Naive thymus-derived CD8-positive, alpha-beta T cell (primary cell): ENCODE measurements at regions of chr6 and their contacts with region 1.

Region 1: GRCh38 chr6:170554013-170554795 is at the start of gene TBP:
- DNase-seq: peak; percentile 87 to 99 (median 97)
- ATAC-seq: peak; percentile 88 to 90
- H3K4me3 Mint-ChIP-seq: no peak within 1 kb of the TSS
- H3K27ac Mint-ChIP-seq: no peak within 1 kb of the TSS
- H3K4me1 Mint-ChIP-seq: peaks cover 20 to 45% (median 25%) of the 10 kb centered on the region in 4 donors
- H3K27me3 Mint-ChIP-seq: no peaks in the 10 kb centered on the region
- polyA plus RNA-seq, gene TBP: 13.8 to 25.6 (median 17.1) TPM

Region 2: GRCh38 chr6:169701954-169702839 is 852.0 kb before region 1 on chr6 and contains the starts of genes C6orf120 and WDR27:
- POLR2A ChIA-PET with region 1: interaction called, 21 read pairs
- DNase-seq: peak; percentile 93 to 98 (median 96)
- ATAC-seq: peak; percentile 88
- H3K4me3 Mint-ChIP-seq: peak within 1 kb of the TSS; percentile 87 to 94 (median 91)
- H3K27ac Mint-ChIP-seq: peak within 1 kb of the TSS; percentile 89 to 97 (median 94)
- H3K4me1 Mint-ChIP-seq: peaks cover 19 to 75% (median 59%) of the 10 kb centered on the region in 4 donors
- H3K27me3 Mint-ChIP-seq: no peaks in the 10 kb centered on the region
- polyA plus RNA-seq, gene C6orf120: 7.9 to 10.1 (median 8.1) TPM
- polyA plus RNA-seq, gene WDR27: 3.7 to 7.3 (median 6.4) TPM

Region 3: DNA sequence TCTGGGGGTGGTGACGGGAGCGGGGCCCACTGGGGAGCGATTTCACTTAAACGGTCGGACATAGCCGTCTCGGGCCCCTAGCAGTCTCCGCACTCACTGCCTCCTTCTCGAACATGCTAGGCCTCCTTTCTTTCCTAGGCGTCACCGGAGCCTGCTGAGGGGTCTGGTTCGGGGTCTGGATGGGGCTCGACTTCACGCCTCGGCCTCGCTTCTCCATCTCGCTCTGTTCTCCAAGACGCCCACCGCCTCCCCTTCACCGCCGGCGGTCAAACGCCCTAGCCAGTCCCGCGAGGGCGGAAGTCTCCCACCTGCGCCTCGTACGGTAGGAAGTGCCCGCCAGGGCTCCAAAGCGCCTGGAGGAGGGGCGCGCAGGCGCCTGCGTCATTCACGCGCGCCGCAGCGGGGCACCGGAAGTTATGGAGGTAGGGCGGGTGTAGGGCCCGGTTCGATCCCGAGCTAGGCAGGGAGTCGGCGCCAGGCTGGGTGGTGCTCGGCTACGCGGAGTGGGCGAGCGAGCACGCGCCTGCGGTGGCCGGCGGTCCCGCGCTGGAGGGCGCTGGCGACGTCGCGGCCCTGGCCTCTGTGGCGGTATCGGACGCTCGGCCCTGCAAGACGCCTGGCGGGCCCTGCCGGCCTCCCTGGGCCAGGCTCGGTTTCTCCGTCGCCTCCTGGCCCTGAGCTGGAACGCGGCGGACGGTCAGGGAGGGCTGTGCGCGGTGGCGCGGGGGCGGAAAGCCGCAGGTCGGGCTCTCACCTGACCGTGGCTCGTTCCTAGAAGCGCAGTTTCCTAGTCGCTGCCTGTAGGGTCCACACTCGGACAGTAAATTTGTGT is 802.7 kb before region 1 on chr6 and contains the starts of genes DYNLT2 and ERMARD:
- POLR2A ChIA-PET with region 1: interaction called, 44 read pairs
- DNase-seq: peak; percentile 89 to 95 (median 94)
- ATAC-seq: peak; percentile 94
- H3K4me3 Mint-ChIP-seq: peak within 1 kb of the TSS; percentile 96 to 100 (median 98)
- H3K27ac Mint-ChIP-seq: peak within 1 kb of the TSS; percentile 98 to 100 (median 100)
- H3K4me1 Mint-ChIP-seq: peaks cover 16 to 41% (median 37%) of the 10 kb centered on the region in 4 donors
- H3K27me3 Mint-ChIP-seq: no peaks in the 10 kb centered on the region
- polyA plus RNA-seq, gene DYNLT2: 0.35 to 0.67 (median 0.63) TPM
- polyA plus RNA-seq, gene ERMARD: 9.2 to 12.4 (median 9.2) TPM

Region 4: GRCh38 chr6:170529839-170530469 is 24.2 kb before region 1 on chr6:
- POLR2A ChIA-PET with region 1: no interaction called
- DNase-seq: peak; percentile 36 to 80 (median 56)
- ATAC-seq: peak; percentile 54 to 76
- H3K4me3 Mint-ChIP-seq: no peak overlapping the region
- H3K27ac Mint-ChIP-seq: peak overlapping the region in 3 of 10 donors; percentile 22 to 77 (median 47)
- H3K4me1 Mint-ChIP-seq: peaks cover 0 to 4% (median 2%) of the 10 kb centered on the region in 4 donors
- H3K27me3 Mint-ChIP-seq: no peaks in the 10 kb centered on the region

Region 5: DNA sequence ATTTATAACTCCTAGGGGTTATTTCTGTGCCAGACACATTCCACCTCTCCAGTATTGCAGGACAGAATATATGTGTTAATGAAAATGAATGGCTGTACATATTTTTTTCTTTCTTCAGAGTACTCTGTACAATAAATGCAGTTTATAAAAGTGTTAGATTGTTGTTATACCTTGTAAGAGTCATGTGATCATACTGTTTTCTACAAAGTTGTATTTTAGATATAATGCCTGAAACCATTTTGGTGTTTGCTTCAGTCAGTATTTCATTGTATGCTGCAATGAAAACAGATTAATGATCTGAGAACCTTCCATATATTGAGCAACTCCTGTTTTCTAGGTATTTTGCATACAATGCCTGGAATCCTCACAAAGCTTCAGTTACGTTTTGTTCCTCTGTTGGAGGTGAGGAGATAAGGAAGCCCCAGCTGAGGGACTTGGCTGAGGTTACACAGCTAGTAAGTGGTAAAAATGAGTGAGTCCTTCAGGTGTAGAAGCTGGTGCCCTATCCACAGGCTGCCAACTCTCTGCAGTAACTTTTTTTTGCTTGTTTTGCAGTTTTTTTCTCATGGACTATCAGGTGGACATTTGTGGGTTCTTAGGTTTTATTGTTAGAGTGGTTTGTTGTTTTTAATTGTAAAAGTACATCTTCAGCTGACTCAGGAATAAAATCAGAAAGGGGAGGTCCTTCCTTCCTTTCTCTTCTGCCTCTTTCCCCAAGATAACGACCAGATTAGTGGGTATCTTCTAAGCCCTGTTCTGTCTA is 18.7 kb after region 1 on chr6:
- POLR2A ChIA-PET with region 1: no interaction called
- DNase-seq: no peak
- ATAC-seq: no peak
- H3K4me3 Mint-ChIP-seq: no peak overlapping the region
- H3K27ac Mint-ChIP-seq: peak overlapping the region in 5 of 10 donors; percentile 19 to 41 (median 29)
- H3K4me1 Mint-ChIP-seq: peaks cover 0 to 3% (median 0%) of the 10 kb centered on the region in 4 donors
- H3K27me3 Mint-ChIP-seq: no peaks in the 10 kb centered on the region

Region 6: DNA sequence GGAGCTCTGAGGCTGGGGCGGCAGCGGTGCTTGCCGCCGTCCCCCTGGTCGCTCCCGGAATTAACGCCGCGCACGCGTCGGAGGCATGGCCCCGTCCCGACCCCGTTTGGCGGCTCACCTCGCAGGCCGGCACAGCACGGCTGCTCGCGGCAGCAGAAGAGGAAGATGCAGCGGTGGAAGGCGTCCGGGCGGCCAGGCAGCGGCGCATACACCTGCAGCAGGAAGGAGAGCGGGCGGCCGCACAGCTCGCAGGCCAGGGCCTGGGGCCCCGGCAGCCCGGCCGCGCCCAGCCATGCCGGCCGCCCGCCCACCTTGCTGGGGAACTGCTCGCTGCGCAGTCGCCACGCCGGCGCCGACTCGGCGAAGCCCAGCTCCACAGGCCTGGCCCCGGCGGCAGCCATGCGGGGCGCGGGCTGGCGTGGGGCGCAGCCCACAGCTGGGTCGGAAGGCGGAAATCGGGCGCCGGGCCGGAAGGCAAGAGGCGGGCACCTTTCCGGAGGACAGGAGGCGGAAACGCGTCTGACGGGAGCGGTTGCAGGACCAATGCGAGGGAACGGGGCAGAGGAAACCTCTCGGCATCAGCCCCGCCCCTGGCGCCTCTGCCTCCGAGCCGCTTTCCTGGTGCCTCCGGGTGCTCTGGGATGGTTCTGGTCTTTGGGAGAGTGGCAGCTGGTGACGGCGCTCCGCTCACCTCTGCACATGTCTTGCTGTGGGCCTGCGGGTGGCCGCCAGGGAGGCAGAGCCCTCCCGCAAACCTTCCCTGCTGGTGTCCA is 30.2 kb after region 1 on chr6 and contains the start of gene PDCD2:
- POLR2A ChIA-PET with region 1: interaction called, 59 read pairs
- DNase-seq: peak; percentile 84 to 95 (median 90)
- ATAC-seq: peak; percentile 94 to 95
- H3K4me3 Mint-ChIP-seq: peak within 1 kb of the TSS; percentile 96 to 99 (median 98)
- H3K27ac Mint-ChIP-seq: peak within 1 kb of the TSS; percentile 96 to 99 (median 98)
- H3K4me1 Mint-ChIP-seq: peaks cover 11 to 38% (median 30%) of the 10 kb centered on the region in 4 donors
- H3K27me3 Mint-ChIP-seq: peaks cover 0 to 6% (median 0%) of the 10 kb centered on the region in 5 donors
- polyA plus RNA-seq, gene PDCD2: 117 to 133 (median 122) TPM